ENCODE measurements at regions of chr22 and their contacts with region 1.

Region 1: GRCh38 chr22:50030297-50031188 is 18.0 kb upstream of the IL17REL start:
- DNase-seq: peak; percentile 77
- H3K4me3 ChIP-seq: no peak overlapping the region
- H3K27ac ChIP-seq: no peak overlapping the region
- H3K4me1 ChIP-seq: peaks cover 0 to 9% (median 7%) of the 10 kb centered on the region in 4 donors
- H3K27me3 ChIP-seq: peaks cover 53% of the 10 kb centered on the region
- CTCF ChIP-seq: peak; percentile 83 to 94 (median 87)
- EP300 ChIP-seq: no peak
- POLR2A ChIP-seq: no peak

Region 2: GRCh38 chr22:49930739-49931412 is 99.7 kb before region 1 on chr22:
- in situ Hi-C with region 1: loop called in 3 of 4 experiments (anchors 5 to 10 kb)
- intact Hi-C with region 1: loop called (anchors 2 kb)
- DNase-seq: peak; percentile 83
- H3K4me3 ChIP-seq: no peak overlapping the region
- H3K27ac ChIP-seq: peak overlapping the region; percentile 48 to 97 (median 57)
- H3K4me1 ChIP-seq: peaks cover 21 to 48% (median 36%) of the 10 kb centered on the region in 4 donors
- H3K27me3 ChIP-seq: peaks cover 9% of the 10 kb centered on the region
- CTCF ChIP-seq: peak; percentile 45 to 74 (median 61)
- EP300 ChIP-seq: no peak
- POLR2A ChIP-seq: peak; percentile 17

Measured in transverse colon (tissue), 4 donors.